Breast epithelium (tissue), 4 donors: ENCODE measurements at regions of chr14 and their contacts with region 1.

Region 1: GRCh38 chr14:75654127-75654732 is 6.4 kb downstream of the ERG28 start:
- DNase-seq: peak; percentile 76 to 88
- H3K4me3 ChIP-seq: no peak overlapping the region
- H3K27ac ChIP-seq: no peak overlapping the region
- H3K4me1 ChIP-seq: no peaks in the 10 kb centered on the region
- H3K27me3 ChIP-seq: no peaks in the 10 kb centered on the region
- CTCF ChIP-seq: peak; percentile 91 to 92 (median 91)
- POLR2A ChIP-seq: no peak

Region 2: GRCh38 chr14:75577729-75578101 is 76.5 kb before region 1 on chr14:
- intact Hi-C with region 1: loop called (anchors 1 kb)
- DNase-seq: peak; percentile 73 to 87
- H3K4me3 ChIP-seq: peak overlapping the region; percentile 47 to 70 (median 62)
- H3K27ac ChIP-seq: peak overlapping the region; percentile 75 to 79
- H3K4me1 ChIP-seq: peaks cover 7% of the 10 kb centered on the region in 2 donors
- H3K27me3 ChIP-seq: no peaks in the 10 kb centered on the region
- CTCF ChIP-seq: peak; percentile 59 to 74 (median 70)
- POLR2A ChIP-seq: no peak

Region 3: GRCh38 chr14:75928690-75929181 is 274.5 kb after region 1 on chr14:
- intact Hi-C with region 1: no loop called
- DNase-seq: no peak
- H3K4me3 ChIP-seq: peak overlapping the region in 1 of 3 donors; percentile 48
- H3K27ac ChIP-seq: no peak overlapping the region
- H3K4me1 ChIP-seq: no peaks in the 10 kb centered on the region
- H3K27me3 ChIP-seq: no peaks in the 10 kb centered on the region
- CTCF ChIP-seq: no peak
- POLR2A ChIP-seq: no peak

Region 4: DNA sequence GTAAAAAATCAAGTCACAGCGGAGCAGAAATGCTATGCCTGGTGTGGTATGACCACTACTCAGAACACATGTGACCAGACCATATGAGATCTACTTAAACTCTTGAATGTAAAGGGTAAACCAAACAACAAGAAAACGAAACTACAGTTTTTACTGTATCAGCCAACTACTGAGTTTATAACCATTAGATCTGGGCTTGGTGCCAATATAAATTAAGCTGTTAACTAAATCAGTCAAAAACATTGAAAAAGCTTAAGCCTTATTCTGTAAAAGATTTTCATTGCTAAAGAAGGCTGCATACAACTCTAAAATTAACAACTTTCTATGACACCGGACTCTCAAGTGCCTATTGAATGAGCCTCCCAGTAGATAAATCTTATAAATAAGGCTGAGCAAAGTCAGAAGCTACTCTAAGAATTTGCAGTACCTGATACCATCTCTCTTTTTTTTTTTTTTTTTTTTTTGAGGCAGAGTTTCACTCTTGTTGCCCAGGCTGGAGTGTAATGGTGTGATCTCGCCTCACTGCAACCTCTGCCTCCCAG is 1926.8 kb after region 1 on chr14:
- intact Hi-C with region 1: no loop called
- DNase-seq: no peak
- H3K4me3 ChIP-seq: peak overlapping the region in 1 of 3 donors; percentile 29
- H3K27ac ChIP-seq: peak overlapping the region in 1 of 2 donors; percentile 0
- H3K4me1 ChIP-seq: no peaks in the 10 kb centered on the region
- H3K27me3 ChIP-seq: no peaks in the 10 kb centered on the region
- CTCF ChIP-seq: no peak
- POLR2A ChIP-seq: no peak